ENCODE measurements at regions of chr3 and their contacts with region 1.

Region 1: DNA sequence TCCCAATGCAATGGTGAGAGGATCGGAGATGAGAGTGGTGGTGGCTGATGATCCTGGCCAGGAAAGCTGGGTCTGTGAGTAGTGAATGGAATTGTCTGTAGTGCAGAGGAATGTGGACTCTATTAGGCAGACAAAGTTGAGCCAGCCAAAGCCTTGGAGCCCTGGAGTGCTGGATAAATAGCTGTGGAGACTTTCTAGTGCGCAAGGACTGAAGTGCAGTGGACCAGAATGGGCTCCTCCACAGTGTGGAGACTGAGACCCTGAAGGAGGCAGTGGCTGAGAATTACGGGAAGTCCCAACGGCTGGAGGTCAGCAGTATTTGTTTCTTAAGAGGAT is 874 bp downstream of the ZNF662 start:
- DNase-seq: no peak
- H3K4me3 ChIP-seq: peak overlapping the region; percentile 47
- H3K27me3 ChIP-seq: peaks cover 1% of the 10 kb centered on the region; the same call in 1 of the 2 replicates
- CTCF ChIP-seq: no peak

Region 2: GRCh38 chr3:44210967-44211366 is 1304.2 kb after region 1 on chr3:
- CTCF ChIA-PET with region 1: no interaction called
- POLR2A ChIA-PET with region 1: interaction called, 27 read pairs
- DNase-seq: no peak
- H3K4me3 ChIP-seq: no peak overlapping the region
- H3K27me3 ChIP-seq: peaks cover 6% of the 10 kb centered on the region; the same call in 1 of the 2 replicates
- CTCF ChIP-seq: no peak

Measured in BJ (cell line).